Tibial artery (tissue), 4 donors: ENCODE measurements at regions of chr7 and their contacts with region 1.

Region 1: GRCh38 chr7:16564909-16565426 is 38.3 kb downstream of the LRRC72 start:
- DNase-seq: no peak
- H3K4me3 ChIP-seq: no peak overlapping the region
- H3K27ac ChIP-seq: no peak overlapping the region
- H3K4me1 ChIP-seq: no peaks in the 10 kb centered on the region
- H3K27me3 ChIP-seq: no peaks in the 10 kb centered on the region
- CTCF ChIP-seq: peak; percentile 65 to 73

Region 2: DNA sequence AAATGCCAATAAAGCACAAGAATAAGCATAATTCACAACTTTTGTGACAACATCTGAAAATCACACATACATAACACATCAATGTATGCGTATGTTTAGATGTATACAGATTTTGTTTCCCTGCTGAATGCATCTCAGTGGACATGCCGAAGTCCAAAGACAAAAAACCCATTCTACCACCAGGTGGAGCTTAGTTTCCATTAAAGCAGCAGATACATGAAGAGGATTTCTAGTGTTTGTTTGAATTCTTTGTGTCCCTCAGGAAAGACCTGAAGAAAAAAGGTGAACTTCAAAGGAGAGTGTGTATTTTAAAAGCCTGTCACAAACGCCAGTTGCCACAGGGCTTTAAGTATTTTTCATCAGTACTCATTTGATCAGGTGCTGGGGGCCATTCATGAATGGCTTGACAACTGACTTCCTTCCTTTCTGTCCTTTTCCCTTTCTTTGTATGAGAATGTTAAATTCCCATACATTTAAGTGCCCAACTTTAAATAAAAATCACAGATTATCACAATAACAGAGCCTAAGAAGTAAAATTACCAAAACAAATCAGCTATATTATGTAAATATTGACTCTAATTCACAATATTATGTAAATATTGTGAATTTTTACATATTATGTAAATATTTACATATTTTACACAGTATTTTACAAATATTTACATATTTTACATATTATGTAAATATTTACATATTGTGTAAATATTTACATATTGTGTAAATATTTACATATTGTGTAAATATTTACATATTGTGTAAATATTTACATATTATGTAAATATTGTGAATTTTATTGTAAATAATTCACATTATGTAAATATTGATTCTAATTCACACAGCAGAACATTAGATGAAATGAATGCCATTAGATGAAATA is 486.7 kb before region 1 on chr7:
- intact Hi-C with region 1: loop called (anchors 5 kb)
- DNase-seq: no peak
- H3K4me3 ChIP-seq: no peak overlapping the region
- H3K27ac ChIP-seq: no peak overlapping the region
- H3K4me1 ChIP-seq: no peaks in the 10 kb centered on the region
- H3K27me3 ChIP-seq: no peaks in the 10 kb centered on the region
- CTCF ChIP-seq: peak; percentile 54 to 74